ENCODE measurements at regions of chr1 and their contacts with region 1.

Region 1: DNA sequence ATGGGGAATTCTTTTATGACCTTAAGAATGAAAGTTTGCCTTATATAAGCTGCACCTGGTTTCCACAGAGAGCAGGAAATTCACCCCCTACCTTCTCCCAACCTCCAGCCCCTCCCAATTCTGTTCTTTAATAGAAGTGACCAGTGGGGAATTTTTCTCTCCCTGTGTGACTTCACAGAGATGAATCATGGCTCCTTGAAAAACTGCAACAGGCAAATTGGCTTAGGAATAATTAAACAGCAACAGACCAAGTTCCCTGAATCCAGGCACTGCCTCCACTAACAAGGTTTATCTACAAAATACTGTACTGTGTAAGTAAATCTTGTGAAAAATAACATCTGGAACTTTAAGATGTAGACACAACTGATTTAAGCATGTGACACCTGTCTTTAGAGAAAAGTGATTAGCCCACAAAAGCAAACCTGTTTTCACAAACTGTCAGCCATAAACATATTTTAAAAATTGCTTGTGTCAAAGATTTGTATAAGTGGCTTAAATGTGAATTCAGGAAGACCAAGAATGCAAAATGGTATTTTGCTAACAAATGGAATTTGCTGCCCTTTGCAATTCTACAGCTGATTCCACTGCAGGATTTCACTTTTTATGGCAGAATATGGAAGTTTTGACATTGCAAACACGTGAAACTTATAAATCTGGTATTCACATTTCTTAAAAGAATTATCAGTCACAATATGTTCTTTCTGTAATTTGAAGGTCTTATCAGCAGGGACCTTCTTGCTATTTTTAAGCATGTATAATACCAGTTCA is 54.0 kb downstream of the ALG14 start:
- DNase-seq: no peak
- H3K4me3 ChIP-seq: no peak overlapping the region
- H3K4me3 Mint-ChIP-seq: no peak overlapping the region
- H3K27ac Mint-ChIP-seq: no peak overlapping the region
- H3K4me1 ChIP-seq: peaks cover 18% of the 10 kb centered on the region
- H3K4me1 Mint-ChIP-seq: peaks cover 11% of the 10 kb centered on the region
- H3K27me3 ChIP-seq: no peaks in the 10 kb centered on the region
- H3K27me3 Mint-ChIP-seq: no peaks in the 10 kb centered on the region
- CTCF ChIP-seq: no peak

Region 2: GRCh38 chr1:94955767-94956632 is 62.8 kb before region 1 on chr1:
- CTCF ChIA-PET with region 1: no interaction called
- POLR2A ChIA-PET with region 1: no interaction called
- intact Hi-C with region 1: loop called (anchors 2 kb)
- DNase-seq: peak; percentile 60 to 78
- H3K4me3 ChIP-seq: no peak overlapping the region
- H3K4me3 Mint-ChIP-seq: peak overlapping the region; percentile 4
- H3K27ac Mint-ChIP-seq: peak overlapping the region; percentile 88
- H3K4me1 ChIP-seq: peaks cover 35% of the 10 kb centered on the region
- H3K4me1 Mint-ChIP-seq: peaks cover 27% of the 10 kb centered on the region
- H3K27me3 ChIP-seq: no peaks in the 10 kb centered on the region
- H3K27me3 Mint-ChIP-seq: no peaks in the 10 kb centered on the region
- CTCF ChIP-seq: no peak